ENCODE measurements at regions of chr5 and their contacts with region 1.

Region 1: DNA sequence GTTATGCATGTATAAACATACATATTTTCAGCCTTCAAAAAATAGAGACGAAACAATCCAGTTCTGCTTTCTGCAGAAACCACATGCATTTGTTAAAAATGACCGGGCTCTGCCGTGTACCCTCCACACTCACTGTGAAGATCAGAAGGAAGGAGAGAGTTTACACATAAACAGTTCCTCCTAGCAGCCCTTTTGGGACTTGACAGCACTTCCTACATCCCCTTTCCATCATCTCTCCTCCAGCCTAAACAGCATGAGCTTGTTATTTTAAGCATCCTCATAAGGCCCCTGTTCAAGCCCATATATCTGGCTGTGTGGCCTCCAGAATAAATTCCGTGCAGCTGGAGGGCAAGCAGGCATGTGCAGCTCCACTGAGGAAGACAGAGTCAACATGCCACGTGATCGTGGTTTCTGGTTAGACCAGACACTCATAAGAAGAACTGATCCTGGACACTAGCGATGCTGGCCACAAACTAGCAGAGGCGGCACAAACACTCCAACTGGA is 42.2 kb downstream of the NIPAL4 start:
- DNase-seq: peak; percentile 87
- ATAC-seq: peak; percentile 76
- H3K4me3 ChIP-seq: no peak overlapping the region
- H3K4me3 Mint-ChIP-seq: peak overlapping the region; percentile 16
- H3K27ac ChIP-seq: peak overlapping the region; percentile 83 to 98
- H3K27ac Mint-ChIP-seq: peak overlapping the region; percentile 95
- H3K4me1 ChIP-seq: peaks cover 84 to 91% of the 10 kb centered on the region in 2 donors
- H3K4me1 Mint-ChIP-seq: peaks cover 87% of the 10 kb centered on the region
- H3K27me3 ChIP-seq: no peaks in the 10 kb centered on the region
- H3K27me3 Mint-ChIP-seq: no peaks in the 10 kb centered on the region
- CTCF ChIP-seq: no peak

Region 2: DNA sequence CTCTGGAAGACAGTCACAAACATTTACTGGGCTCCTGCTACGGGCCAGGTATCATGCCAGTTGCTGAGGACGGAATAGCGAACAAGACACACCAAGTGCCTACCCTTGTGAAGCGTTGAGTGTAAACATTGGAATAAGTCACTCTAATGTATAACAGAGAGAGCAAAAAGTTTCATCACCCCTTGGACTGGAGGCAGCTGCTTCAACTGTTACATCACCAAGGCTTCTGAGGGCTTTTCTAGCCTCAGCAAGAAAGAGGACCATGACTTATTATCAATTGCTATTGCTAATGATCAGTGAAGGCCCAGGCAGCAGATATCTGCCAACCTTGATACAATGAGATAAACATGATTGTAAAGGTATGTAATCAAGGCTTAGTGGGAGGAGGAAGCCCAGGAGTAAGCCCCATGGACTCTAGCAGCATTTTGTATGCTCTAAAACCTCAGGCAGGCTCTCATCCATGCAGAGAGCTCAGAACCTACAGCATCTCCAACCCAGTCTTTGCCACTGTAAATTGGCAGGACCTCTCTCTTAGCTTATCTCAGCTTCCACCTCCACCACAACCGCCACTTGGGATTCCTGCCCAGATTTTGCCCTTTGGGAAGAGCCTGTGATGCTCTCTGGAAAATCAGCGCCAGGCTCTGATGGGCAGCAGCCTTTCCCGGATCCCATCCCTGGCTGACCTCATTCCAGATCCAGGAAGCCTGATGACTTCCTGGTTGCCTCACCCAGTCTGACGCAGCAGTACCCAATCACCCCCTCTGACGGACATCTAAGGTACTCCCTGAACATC is 18.9 kb after region 1 on chr5:
- CTCF ChIA-PET with region 1: interaction called, 8 read pairs
- POLR2A ChIA-PET with region 1: interaction called, 5 read pairs
- intact Hi-C with region 1: loop called (anchors 2 kb)
- DNase-seq: no peak
- ATAC-seq: no peak
- H3K4me3 ChIP-seq: no peak overlapping the region
- H3K4me3 Mint-ChIP-seq: peak overlapping the region; percentile 34
- H3K27ac ChIP-seq: peak overlapping the region in 1 of 2 donors; percentile 74
- H3K27ac Mint-ChIP-seq: peak overlapping the region; percentile 92
- H3K4me1 ChIP-seq: peaks cover 43 to 62% of the 10 kb centered on the region in 2 donors
- H3K4me1 Mint-ChIP-seq: peaks cover 69% of the 10 kb centered on the region
- H3K27me3 ChIP-seq: no peaks in the 10 kb centered on the region
- H3K27me3 Mint-ChIP-seq: no peaks in the 10 kb centered on the region
- CTCF ChIP-seq: no peak

Region 3: DNA sequence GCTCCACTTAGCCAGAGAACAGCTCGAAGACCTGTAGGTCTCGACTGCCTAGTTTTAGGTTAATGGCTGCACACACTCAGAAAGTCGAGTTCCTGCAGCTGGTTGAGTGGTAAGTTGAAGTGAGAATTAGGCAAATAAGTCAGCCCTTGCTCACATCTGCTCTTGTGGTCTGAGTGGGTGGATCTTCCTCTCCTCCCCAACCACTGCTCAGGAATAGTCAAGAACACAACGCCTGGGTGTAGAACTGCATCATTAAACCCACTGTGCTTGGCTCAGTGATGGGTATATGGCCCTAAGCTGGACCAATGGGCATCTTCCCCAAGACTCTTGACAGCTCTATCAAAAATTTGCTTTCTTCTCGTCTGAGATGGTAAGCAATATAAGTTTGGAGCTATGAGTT is 94.3 kb after region 1 on chr5:
- CTCF ChIA-PET with region 1: interaction called, 6 read pairs
- POLR2A ChIA-PET with region 1: no interaction called
- intact Hi-C with region 1: loop called (anchors 1 kb)
- DNase-seq: peak; percentile 87
- ATAC-seq: peak; percentile 73
- H3K4me3 ChIP-seq: peak overlapping the region in 1 of 5 experiments; percentile 31
- H3K4me3 Mint-ChIP-seq: peak overlapping the region; percentile 45
- H3K27ac ChIP-seq: peak overlapping the region; percentile 92 to 97
- H3K27ac Mint-ChIP-seq: peak overlapping the region; percentile 85
- H3K4me1 ChIP-seq: peaks cover 92 to 95% of the 10 kb centered on the region in 2 donors
- H3K4me1 Mint-ChIP-seq: peaks cover 93% of the 10 kb centered on the region
- H3K27me3 ChIP-seq: no peaks in the 10 kb centered on the region
- H3K27me3 Mint-ChIP-seq: no peaks in the 10 kb centered on the region
- CTCF ChIP-seq: no peak

Region 4: DNA sequence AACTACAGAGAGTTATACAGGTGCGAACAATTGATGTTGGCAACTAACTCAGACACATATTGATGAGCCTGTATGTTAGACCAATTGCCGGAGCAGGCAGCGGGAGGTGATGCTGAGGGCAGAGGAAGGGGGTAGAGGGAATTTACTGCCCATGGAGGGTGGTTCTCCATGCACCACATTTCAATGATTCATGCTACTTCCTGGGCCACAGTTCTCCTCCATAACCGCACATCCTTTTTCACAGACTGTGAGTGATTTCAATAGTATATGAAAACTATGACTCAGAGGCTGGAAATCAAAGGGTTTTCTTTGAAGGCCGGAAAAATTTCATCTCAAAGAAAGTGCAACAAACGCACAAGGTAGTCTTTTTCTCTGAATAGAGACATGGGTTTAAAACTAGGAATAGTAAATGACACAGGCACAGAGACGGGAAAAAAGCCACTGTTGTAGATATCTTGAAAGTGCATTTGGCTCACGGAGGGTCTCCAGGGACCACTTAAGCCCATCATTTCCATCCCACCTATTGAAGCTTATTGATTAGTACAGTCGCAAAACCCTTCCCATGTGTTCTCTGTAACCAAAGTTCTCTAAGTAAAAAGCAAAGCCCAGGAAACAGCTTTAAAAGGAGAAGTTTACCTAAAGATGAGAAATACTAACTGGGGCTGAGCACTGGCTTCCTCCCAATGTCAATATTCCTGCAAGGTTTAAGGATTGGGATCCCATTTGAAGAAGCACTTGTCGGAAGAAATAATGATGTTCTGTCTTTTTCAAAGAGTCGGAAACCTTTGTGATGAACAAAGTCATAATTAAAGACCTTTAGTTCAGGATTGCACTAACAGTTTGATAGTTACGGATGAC is 101.4 kb after region 1 on chr5:
- CTCF ChIA-PET with region 1: no interaction called
- POLR2A ChIA-PET with region 1: no interaction called
- intact Hi-C with region 1: loop called (anchors 2 kb)
- DNase-seq: peak; percentile 38
- ATAC-seq: peak; percentile 14
- H3K4me3 ChIP-seq: no peak overlapping the region
- H3K4me3 Mint-ChIP-seq: peak overlapping the region; percentile 20
- H3K27ac ChIP-seq: peak overlapping the region; percentile 65 to 77
- H3K27ac Mint-ChIP-seq: peak overlapping the region; percentile 81
- H3K4me1 ChIP-seq: peaks cover 71 to 73% of the 10 kb centered on the region in 2 donors
- H3K4me1 Mint-ChIP-seq: peaks cover 73% of the 10 kb centered on the region
- H3K27me3 ChIP-seq: no peaks in the 10 kb centered on the region
- H3K27me3 Mint-ChIP-seq: no peaks in the 10 kb centered on the region
- CTCF ChIP-seq: no peak

Region 5: DNA sequence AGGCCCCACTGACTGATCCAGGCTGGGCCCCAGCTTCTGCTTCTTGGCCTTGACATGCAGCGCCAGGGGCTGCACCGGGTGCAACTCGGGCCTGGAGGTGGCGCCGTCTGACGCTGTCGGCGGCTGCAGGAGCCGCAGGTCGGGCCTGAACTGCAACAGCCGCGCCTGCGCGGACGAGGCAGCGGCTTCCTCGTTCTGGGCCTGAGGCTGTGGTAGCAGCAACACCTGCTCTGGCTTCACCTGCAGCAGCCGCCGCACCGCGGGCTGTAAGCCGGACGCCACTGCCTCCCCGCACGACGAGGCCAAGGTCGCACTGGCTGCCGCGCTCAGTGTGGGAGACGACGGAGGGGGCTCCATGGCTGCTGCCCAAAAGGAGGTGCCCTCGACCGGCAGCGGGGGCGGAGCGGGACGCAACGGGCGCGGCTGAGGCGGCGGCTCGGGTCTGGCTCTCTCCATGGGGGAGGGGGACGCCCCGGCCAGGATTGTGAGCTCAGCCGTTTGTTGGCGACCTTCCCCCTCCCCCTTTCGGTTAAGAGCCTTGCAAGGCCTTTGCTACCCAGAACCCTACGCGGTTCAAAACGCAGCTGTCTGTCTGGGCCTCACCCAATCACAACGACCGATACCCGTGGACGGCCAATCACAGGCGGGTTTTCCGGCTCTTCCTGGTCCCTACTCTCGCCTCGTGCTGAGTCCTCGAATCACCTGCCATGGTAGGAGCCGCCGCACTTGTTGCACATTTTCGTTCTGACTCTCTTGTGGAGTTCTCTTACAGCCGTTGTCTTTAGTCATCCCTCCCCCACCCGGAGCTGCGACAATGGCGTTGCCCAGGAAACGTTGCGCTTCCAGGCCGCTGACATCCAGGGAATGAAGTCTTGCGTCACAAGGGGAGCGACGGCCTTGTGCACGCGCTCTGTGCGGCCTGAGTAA is 149.7 kb after region 1 on chr5 and contains the start of gene SOX30:
- CTCF ChIA-PET with region 1: interaction called, 4 read pairs
- POLR2A ChIA-PET with region 1: no interaction called
- intact Hi-C with region 1: loop called (anchors 5 kb)
- DNase-seq: peak; percentile 92
- ATAC-seq: peak; percentile 97
- H3K4me3 ChIP-seq: peak within 1 kb of the TSS in 4 of 5 experiments; percentile 46 to 60 (median 58)
- H3K4me3 Mint-ChIP-seq: peak within 1 kb of the TSS; percentile 89
- H3K27ac ChIP-seq: peak within 1 kb of the TSS; percentile 67 to 77
- H3K27ac Mint-ChIP-seq: peak within 1 kb of the TSS; percentile 90
- H3K4me1 ChIP-seq: peaks cover 34 to 36% of the 10 kb centered on the region in 2 donors
- H3K4me1 Mint-ChIP-seq: peaks cover 42% of the 10 kb centered on the region
- H3K27me3 ChIP-seq: no peaks in the 10 kb centered on the region
- H3K27me3 Mint-ChIP-seq: no peaks in the 10 kb centered on the region
- CTCF ChIP-seq: peak; percentile 59
- total RNA-seq, gene SOX30: 0.29 and 0.49 TPM in 2 replicates